B cell (primary cell): ENCODE measurements at regions of chr7 and their contacts with region 1.

Region 1: GRCh38 chr7:129825496-129826267 is 127.1 kb downstream of the UBE2H start:
- DNase-seq: peak; percentile 88
- ATAC-seq: peak; percentile 92
- H3K4me3 ChIP-seq: peak overlapping the region; percentile 50 to 83 (median 64)
- H3K4me3 Mint-ChIP-seq: peak overlapping the region; percentile 96
- H3K27ac ChIP-seq: no peak overlapping the region
- H3K27ac Mint-ChIP-seq: peak overlapping the region; percentile 55
- H3K4me1 ChIP-seq: peaks cover 16 to 26% of the 10 kb centered on the region in 2 donors
- H3K4me1 Mint-ChIP-seq: peaks cover 18% of the 10 kb centered on the region
- H3K27me3 ChIP-seq: no peaks in the 10 kb centered on the region
- H3K27me3 Mint-ChIP-seq: no peaks in the 10 kb centered on the region
- CTCF ChIP-seq: peak; percentile 95

Region 2: DNA sequence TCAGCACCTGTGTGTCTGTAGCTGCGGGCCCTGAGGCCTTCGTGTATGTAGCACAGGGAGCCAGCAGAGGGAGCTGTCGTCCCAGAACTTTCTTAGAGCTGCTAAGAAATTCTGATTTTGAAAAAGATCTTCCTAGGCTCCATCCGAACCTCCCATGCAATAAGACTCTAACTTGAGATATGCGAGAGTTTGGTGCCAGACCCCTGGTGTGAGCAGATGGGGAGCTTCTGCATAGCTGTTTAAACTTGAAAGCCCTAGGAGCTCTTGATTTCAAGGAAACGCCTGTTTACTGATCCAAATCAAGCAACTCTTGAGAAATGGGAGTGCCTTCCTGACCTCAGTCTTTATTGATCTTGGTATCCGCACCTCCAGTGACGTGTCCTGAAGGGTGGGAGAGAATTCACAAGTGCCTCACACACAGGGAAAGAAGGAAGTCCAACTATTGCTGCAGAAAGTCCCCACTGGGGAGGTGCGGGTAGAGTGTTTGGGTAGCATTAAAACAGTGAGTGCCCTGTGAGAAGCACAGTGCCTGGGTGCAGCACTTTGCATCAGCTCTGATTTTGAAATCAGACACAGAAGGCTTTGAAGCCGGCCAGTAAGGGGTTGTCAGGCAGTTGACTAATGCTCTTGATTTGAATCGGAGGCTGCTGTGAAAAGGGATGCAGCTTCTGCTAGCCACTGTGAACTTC is 457.8 kb before region 1 on chr7:
- CTCF ChIA-PET with region 1: interaction called, 24 read pairs
- POLR2A ChIA-PET with region 1: no interaction called
- intact Hi-C with region 1: loop called (anchors 1 kb)
- DNase-seq: peak; percentile 79
- ATAC-seq: peak; percentile 85
- H3K4me3 ChIP-seq: peak overlapping the region in 3 of 5 experiments; percentile 15 to 32 (median 23)
- H3K4me3 Mint-ChIP-seq: peak overlapping the region; percentile 69
- H3K27ac ChIP-seq: peak overlapping the region in 1 of 2 donors; percentile 67
- H3K27ac Mint-ChIP-seq: peak overlapping the region; percentile 66
- H3K4me1 ChIP-seq: peaks cover 14 to 15% of the 10 kb centered on the region in 2 donors
- H3K4me1 Mint-ChIP-seq: peaks cover 21% of the 10 kb centered on the region
- H3K27me3 ChIP-seq: no peaks in the 10 kb centered on the region
- H3K27me3 Mint-ChIP-seq: no peaks in the 10 kb centered on the region
- CTCF ChIP-seq: peak; percentile 88

Region 3: DNA sequence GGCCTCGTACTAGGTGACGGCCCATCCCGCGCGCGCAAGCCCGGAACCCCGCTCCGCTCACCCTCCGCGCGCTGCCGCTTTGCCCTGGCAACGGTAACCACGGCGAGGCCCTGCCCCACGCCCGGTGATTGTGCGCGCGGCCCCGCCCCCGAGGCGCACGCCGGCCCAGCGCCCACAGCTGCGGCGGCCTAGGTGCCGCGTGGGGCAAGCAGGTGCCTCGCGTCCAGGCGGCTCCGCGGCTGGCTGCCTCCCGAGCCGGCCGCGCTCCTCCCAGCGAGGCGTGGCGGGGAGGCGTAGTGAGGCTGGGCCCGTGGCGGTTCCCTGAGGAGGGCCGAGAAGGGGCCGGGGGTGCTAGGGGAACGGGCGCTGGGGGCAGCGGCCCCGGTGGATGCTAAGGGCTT is 323.3 kb before region 1 on chr7 and contains the start of gene SMKR1:
- CTCF ChIA-PET with region 1: interaction called, 3 read pairs
- POLR2A ChIA-PET with region 1: no interaction called
- intact Hi-C with region 1: loop called (anchors 5 kb)
- DNase-seq: peak; percentile 98
- ATAC-seq: peak; percentile 89
- H3K4me3 ChIP-seq: peak within 1 kb of the TSS; percentile 54 to 77 (median 66)
- H3K4me3 Mint-ChIP-seq: peak within 1 kb of the TSS; percentile 90
- H3K27ac ChIP-seq: peak within 1 kb of the TSS; percentile 72
- H3K27ac Mint-ChIP-seq: peak within 1 kb of the TSS; percentile 89
- H3K4me1 ChIP-seq: peaks cover 14 to 32% of the 10 kb centered on the region in 2 donors
- H3K4me1 Mint-ChIP-seq: peaks cover 22% of the 10 kb centered on the region
- H3K27me3 ChIP-seq: no peaks in the 10 kb centered on the region
- H3K27me3 Mint-ChIP-seq: no peaks in the 10 kb centered on the region
- CTCF ChIP-seq: no peak
- total RNA-seq, gene SMKR1: 2.9 and 3.8 TPM in 2 replicates

Region 4: DNA sequence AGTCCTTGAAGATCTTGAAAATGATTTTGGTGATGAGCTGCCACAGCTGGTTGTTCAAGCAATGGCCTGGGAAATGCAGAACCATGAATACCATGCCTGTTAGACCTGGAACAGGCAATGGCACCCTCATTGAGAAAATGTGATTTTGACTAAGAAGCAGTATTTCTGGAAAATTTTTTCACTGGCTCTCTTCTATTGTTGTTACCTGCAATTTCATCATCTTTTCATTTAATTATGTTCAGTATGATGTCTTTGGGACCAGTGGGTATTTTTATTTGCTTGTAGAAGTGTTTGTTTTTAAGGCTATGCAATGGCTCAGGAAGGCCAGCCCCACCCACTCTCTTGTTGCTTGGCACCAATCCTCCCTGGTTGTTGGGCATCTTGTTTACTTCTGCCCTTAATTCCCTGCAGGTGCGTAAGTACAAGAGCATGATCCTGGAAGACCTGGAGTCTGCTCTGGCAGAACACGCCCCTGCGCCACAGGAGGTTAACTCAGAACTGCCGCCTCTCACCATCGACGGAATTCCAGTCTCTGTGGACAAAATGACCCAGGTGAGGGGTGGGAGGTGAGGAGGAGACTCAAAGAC is 135.6 kb before region 1 on chr7:
- CTCF ChIA-PET with region 1: interaction called, 3 read pairs
- POLR2A ChIA-PET with region 1: interaction called, 15 read pairs
- intact Hi-C with region 1: no loop called
- DNase-seq: no peak
- ATAC-seq: no peak
- H3K4me3 ChIP-seq: no peak overlapping the region
- H3K4me3 Mint-ChIP-seq: no peak overlapping the region
- H3K27ac ChIP-seq: no peak overlapping the region
- H3K27ac Mint-ChIP-seq: no peak overlapping the region
- H3K4me1 ChIP-seq: no peaks in the 10 kb centered on the region
- H3K4me1 Mint-ChIP-seq: no peaks in the 10 kb centered on the region
- H3K27me3 ChIP-seq: no peaks in the 10 kb centered on the region
- H3K27me3 Mint-ChIP-seq: no peaks in the 10 kb centered on the region
- CTCF ChIP-seq: no peak

Region 5: GRCh38 chr7:129780257-129780973 is 45.3 kb before region 1 on chr7:
- CTCF ChIA-PET with region 1: interaction called, 4 read pairs
- POLR2A ChIA-PET with region 1: no interaction called
- intact Hi-C with region 1: loop called (anchors 2 kb)
- DNase-seq: no peak
- ATAC-seq: peak; percentile 74
- H3K4me3 ChIP-seq: peak overlapping the region in 4 of 5 experiments; percentile 40 to 65 (median 57)
- H3K4me3 Mint-ChIP-seq: peak overlapping the region; percentile 81
- H3K27ac ChIP-seq: no peak overlapping the region
- H3K27ac Mint-ChIP-seq: no peak overlapping the region
- H3K4me1 ChIP-seq: peaks cover 66 to 71% of the 10 kb centered on the region in 2 donors
- H3K4me1 Mint-ChIP-seq: peaks cover 44% of the 10 kb centered on the region
- H3K27me3 ChIP-seq: peaks cover 0 to 91% (median 59%) of the 10 kb centered on the region in 4 experiments
- H3K27me3 Mint-ChIP-seq: peaks cover 43% of the 10 kb centered on the region
- CTCF ChIP-seq: no peak

Region 6: DNA sequence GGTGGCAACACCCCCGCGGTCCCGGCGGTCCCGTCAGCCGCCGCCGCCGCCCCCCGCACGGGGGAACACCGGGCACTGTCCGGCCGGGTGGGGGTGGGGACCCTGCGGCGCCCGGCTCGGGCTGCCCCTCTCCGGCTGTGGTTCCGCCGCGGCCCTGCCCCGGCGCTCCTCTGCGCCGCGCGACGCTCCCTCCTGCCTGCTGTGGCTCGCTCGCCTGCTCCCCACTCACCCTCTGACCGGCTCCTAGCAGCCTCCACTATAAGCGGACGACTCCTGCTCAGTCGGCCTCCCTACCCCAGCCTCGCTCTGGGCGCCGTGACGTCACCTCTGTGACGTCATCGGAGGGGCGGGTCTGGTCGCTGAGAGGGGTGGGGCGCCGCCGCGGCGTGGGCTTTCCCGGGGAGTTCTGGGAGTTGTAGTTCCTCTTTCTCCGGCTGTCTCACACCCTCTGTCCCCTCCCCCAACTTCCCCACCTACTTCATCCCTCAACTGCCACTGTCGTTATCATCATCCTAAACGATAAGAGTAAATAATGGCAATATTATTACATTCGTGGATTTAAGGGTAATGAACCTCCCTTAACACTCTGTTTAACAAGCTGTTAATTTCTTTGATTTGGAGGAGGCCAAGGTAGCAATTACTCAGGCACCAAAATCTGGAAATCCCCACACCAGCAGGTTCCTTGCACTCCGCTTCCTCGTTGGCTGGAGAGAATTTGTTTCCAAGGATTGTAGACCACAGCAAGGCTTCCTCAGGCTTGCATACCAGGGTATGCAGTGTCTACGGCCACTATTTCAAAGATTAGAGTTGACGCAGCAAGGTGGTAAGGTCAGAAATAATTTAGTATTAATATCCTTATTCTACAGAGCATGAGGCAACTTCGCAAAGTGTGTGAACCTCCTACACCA is 127.2 kb after region 1 on chr7 and contains the start of gene UBE2H:
- CTCF ChIA-PET with region 1: interaction called, 6 read pairs
- POLR2A ChIA-PET with region 1: no interaction called
- intact Hi-C with region 1: loop called (anchors 2 kb)
- DNase-seq: peak; percentile 96
- ATAC-seq: peak; percentile 73
- H3K4me3 ChIP-seq: peak within 1 kb of the TSS; percentile 72 to 95 (median 93)
- H3K4me3 Mint-ChIP-seq: peak within 1 kb of the TSS; percentile 95
- H3K27ac ChIP-seq: peak within 1 kb of the TSS; percentile 87 to 94
- H3K27ac Mint-ChIP-seq: peak within 1 kb of the TSS; percentile 99
- H3K4me1 ChIP-seq: peaks cover 32 to 40% of the 10 kb centered on the region in 2 donors
- H3K4me1 Mint-ChIP-seq: peaks cover 16% of the 10 kb centered on the region
- H3K27me3 ChIP-seq: no peaks in the 10 kb centered on the region
- H3K27me3 Mint-ChIP-seq: no peaks in the 10 kb centered on the region
- CTCF ChIP-seq: no peak
- total RNA-seq, gene UBE2H: 43.6 and 54.1 TPM in 2 replicates